CD4-positive, alpha-beta memory T cell (primary cell): ENCODE measurements at regions of chr12 and their contacts with region 1.

Region 1: DNA sequence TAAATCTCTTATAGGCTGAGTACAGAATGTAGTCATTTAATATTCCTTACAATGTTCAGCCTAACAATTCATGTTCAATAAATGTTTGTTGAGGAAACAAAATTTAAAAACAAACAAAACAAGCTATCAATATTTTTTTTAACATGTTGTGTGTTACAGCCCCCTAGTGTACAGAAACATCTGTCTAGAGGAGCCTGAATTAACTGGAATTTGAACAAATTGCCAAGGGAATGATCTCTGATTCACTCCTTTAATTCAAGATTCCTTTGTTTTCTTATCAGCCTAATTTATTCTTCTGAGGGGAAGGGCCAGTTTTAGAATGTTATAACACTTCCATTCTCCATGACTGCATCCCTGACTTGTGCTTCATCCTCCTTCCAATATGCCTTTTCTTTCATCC is 127.2 kb downstream of the CMAS start:
- DNase-seq: no peak
- H3K4me3 ChIP-seq: no peak overlapping the region
- H3K4me3 Mint-ChIP-seq: no peak overlapping the region
- H3K27ac ChIP-seq: no peak overlapping the region
- H3K27ac Mint-ChIP-seq: no peak overlapping the region
- H3K4me1 ChIP-seq: no peaks in the 10 kb centered on the region
- H3K4me1 Mint-ChIP-seq: peaks cover 4 to 5% (median 5%) of the 10 kb centered on the region in 4 donors
- H3K27me3 ChIP-seq: no peaks in the 10 kb centered on the region
- H3K27me3 Mint-ChIP-seq: peaks cover 0 to 2% of the 10 kb centered on the region in 2 donors

Region 2: GRCh38 chr12:21676776-21677175 is 496.4 kb before region 1 on chr12:
- CTCF ChIA-PET with region 1: no interaction called
- POLR2A ChIA-PET with region 1: no interaction called
- intact Hi-C with region 1: no loop called
- DNase-seq: peak in 4 of 5 donors; percentile 26 to 46 (median 44)
- H3K4me3 ChIP-seq: peak overlapping the region in 1 of 2 donors; percentile 16
- H3K4me3 Mint-ChIP-seq: peak overlapping the region; percentile 79 to 91 (median 82)
- H3K27ac ChIP-seq: peak overlapping the region; percentile 45
- H3K27ac Mint-ChIP-seq: peak overlapping the region; percentile 81 to 97 (median 85)
- H3K4me1 ChIP-seq: peaks cover 58% of the 10 kb centered on the region
- H3K4me1 Mint-ChIP-seq: peaks cover 44 to 65% (median 52%) of the 10 kb centered on the region in 4 donors
- H3K27me3 ChIP-seq: no peaks in the 10 kb centered on the region
- H3K27me3 Mint-ChIP-seq: no peaks in the 10 kb centered on the region

Region 3: DNA sequence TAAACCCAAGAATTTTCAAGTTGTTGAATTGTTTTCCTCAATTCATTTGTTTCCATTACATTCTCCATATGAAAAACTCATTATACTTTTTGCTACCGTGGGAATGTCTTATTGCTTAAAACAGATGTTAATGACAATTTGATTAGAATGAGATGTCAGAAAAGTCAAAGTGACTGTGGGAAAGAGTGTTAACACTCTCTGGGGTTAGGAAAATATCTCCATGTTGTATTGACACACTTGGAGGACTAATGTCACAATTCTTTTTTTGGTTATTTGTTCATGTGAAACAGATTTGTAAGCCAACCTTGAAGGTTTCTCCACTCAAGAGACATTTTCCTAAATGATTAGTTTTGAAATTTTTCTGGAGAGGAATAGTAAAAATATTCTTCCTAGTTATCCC is 174.4 kb before region 1 on chr12:
- CTCF ChIA-PET with region 1: no interaction called
- POLR2A ChIA-PET with region 1: no interaction called
- intact Hi-C with region 1: no loop called
- DNase-seq: no peak
- H3K4me3 ChIP-seq: no peak overlapping the region
- H3K4me3 Mint-ChIP-seq: no peak overlapping the region
- H3K27ac ChIP-seq: no peak overlapping the region
- H3K27ac Mint-ChIP-seq: no peak overlapping the region
- H3K4me1 ChIP-seq: no peaks in the 10 kb centered on the region
- H3K4me1 Mint-ChIP-seq: no peaks in the 10 kb centered on the region
- H3K27me3 ChIP-seq: no peaks in the 10 kb centered on the region
- H3K27me3 Mint-ChIP-seq: peaks cover 0 to 3% of the 10 kb centered on the region in 2 donors

Region 4: DNA sequence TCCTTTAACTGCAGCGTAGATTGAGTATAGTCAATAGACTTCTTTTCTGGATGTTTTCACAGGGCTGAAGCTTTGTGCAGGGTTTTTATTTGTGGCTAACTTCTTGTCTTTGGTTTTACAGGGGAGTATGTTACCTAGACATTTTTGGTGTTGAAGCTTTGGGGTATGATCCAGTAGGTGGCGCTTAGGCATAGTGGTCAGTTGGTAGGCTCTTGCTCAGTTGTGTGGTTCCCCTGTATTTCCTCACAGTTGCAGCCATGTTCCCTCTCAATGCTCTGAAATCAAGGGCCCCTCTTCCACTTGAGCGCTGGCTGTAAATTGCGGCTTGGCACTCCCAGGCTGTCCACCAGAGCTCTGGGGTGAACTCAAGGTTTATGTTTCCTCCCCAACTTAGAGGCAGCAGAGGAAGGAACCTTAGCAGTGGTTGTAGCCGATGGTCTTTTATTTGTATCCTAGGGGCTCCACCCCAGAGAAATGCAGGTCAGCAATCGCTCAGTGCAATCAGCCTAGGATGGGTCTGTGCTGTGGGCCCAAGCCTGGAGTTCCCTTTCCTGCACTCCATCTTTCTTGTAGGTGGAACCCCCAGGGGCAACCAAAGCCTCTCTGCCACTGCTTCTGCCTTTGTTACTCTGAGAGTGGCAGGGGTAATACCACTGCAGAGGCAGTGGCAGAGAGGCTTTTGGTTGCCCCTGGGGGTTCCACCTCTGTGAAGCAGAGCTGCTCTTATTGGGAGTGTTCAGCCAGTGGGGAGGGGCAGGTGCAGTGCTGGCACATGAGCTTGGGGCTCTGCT is 72.0 kb before region 1 on chr12:
- CTCF ChIA-PET with region 1: interaction called, 47 read pairs
- POLR2A ChIA-PET with region 1: no interaction called
- intact Hi-C with region 1: loop called (anchors 1 kb)
- DNase-seq: peak in 4 of 5 donors; percentile 45 to 55 (median 47)
- H3K4me3 ChIP-seq: no peak overlapping the region
- H3K4me3 Mint-ChIP-seq: peak overlapping the region in 1 of 8 donors; percentile 32
- H3K27ac ChIP-seq: no peak overlapping the region
- H3K27ac Mint-ChIP-seq: peak overlapping the region in 1 of 7 donors; percentile 13
- H3K4me1 ChIP-seq: peaks cover 14% of the 10 kb centered on the region
- H3K4me1 Mint-ChIP-seq: peaks cover 7 to 17% (median 13%) of the 10 kb centered on the region in 4 donors
- H3K27me3 ChIP-seq: no peaks in the 10 kb centered on the region
- H3K27me3 Mint-ChIP-seq: no peaks in the 10 kb centered on the region

Region 5: GRCh38 chr12:22121227-22121626 is 52.0 kb before region 1 on chr12:
- CTCF ChIA-PET with region 1: interaction called, 18 read pairs
- POLR2A ChIA-PET with region 1: no interaction called
- intact Hi-C with region 1: no loop called
- DNase-seq: peak in 4 of 5 donors; percentile 21 to 39 (median 28)
- H3K4me3 ChIP-seq: no peak overlapping the region
- H3K4me3 Mint-ChIP-seq: no peak overlapping the region
- H3K27ac ChIP-seq: no peak overlapping the region
- H3K27ac Mint-ChIP-seq: no peak overlapping the region
- H3K4me1 ChIP-seq: no peaks in the 10 kb centered on the region
- H3K4me1 Mint-ChIP-seq: peaks cover 0 to 6% (median 3%) of the 10 kb centered on the region in 4 donors
- H3K27me3 ChIP-seq: no peaks in the 10 kb centered on the region
- H3K27me3 Mint-ChIP-seq: no peaks in the 10 kb centered on the region

Region 6: GRCh38 chr12:22215467-22216253 is 42.5 kb after region 1 on chr12:
- CTCF ChIA-PET with region 1: no interaction called
- POLR2A ChIA-PET with region 1: no interaction called
- intact Hi-C with region 1: no loop called
- DNase-seq: no peak
- H3K4me3 ChIP-seq: no peak overlapping the region
- H3K4me3 Mint-ChIP-seq: no peak overlapping the region
- H3K27ac ChIP-seq: no peak overlapping the region
- H3K27ac Mint-ChIP-seq: no peak overlapping the region
- H3K4me1 ChIP-seq: no peaks in the 10 kb centered on the region
- H3K4me1 Mint-ChIP-seq: peaks cover 0 to 9% (median under 1%) of the 10 kb centered on the region in 4 donors
- H3K27me3 ChIP-seq: no peaks in the 10 kb centered on the region
- H3K27me3 Mint-ChIP-seq: no peaks in the 10 kb centered on the region